HepG2 (cell line): ENCODE measurements at regions of chr6 and their contacts with region 1.

Region 1: DNA sequence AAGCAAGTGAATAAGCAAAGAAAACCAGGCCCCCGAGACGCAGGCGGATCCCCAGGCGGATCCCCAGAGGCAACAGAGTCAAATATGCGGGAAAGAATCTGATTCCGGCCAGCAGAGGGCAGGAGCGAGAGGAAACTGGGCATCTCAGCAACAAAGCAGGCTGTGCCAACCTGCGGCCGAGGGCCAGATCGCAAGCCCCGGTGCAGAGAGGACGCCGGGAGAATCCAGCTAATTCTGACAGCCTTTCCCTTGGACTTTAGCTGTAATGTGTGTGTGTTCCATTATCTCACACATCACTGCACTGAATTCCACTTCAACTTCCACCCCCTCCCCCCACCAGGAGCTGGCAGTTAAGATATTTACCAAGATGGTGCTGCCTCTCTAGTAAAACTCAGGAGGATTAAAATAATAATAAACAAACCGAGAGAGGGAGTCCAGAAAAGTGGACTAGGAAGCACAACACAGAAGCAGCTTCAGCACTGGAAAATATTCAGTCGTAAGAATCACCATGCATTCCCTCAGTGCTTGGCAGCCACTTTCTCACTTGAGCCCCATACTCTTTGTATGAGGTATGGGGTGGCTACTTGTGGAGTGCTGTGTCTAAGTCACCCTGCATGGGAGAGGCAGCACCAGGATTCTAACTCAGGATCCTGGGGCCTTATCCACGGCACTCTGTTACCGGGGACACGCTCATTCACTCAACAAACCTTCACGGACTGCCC is 66.2 kb upstream of the SNX9 start:
- DNase-seq: peak; percentile 81
- ATAC-seq: peak; percentile 95
- H3K4me3 ChIP-seq: peak overlapping the region in 2 of 3 experiments; percentile 4 to 34; a peak in 3 of 6 replicates
- H3K27ac ChIP-seq: no peak overlapping the region
- H3K4me1 ChIP-seq: peaks cover 57% of the 10 kb centered on the region
- H3K27me3 ChIP-seq: peaks cover 0 to 2% of the 10 kb centered on the region in 2 experiments; a peak in 1 of 5 replicates
- CTCF ChIP-seq: peak; percentile 95
- EP300 ChIP-seq: no peak; a peak in 1 of 4 replicates
- POLR2A ChIP-seq: no peak
- RAD21 ChIP-seq: peak; percentile 96

Region 2: DNA sequence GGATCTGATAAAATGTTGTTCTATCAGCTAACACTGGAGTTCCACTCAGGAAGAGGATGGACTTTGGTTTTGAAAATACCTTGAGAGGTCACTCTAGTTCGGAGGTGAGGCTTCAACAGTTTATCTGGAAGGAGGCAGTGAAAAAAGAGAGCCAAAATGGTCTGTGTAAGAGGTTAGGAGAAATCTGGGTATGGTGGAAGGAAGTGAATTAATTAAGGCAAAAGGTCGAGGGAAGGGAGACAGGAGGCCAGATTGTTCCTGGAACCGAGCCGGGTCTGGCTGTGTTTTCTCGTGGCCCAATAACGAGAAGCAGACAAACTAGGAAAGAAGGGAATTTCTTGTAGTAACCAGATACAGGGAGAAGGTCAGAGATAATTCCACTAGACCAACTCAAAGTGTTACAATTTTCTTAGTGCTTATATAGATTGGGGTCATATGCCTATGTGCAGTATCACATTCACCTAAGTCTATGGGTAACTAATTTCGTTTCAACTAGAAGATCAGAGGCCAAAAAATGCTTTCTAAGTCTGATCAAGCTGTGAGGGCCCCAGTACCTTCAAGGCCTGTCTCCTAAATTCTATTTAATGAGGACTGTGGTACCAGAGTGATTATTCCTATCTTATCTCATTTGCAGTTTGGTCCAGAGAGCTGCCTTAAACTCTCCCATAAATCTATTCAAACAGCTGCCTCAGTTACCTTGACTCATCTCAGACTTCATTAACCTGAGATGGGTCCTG is 29.8 kb before region 1 on chr6:
- CTCF ChIA-PET with region 1: no interaction called
- POLR2A ChIA-PET with region 1: interaction called, 10 read pairs
- in situ Hi-C with region 1: no loop called
- intact Hi-C with region 1: loop called (anchors 5 kb)
- DNase-seq: no peak
- ATAC-seq: no peak
- H3K4me3 ChIP-seq: no peak overlapping the region; a peak in 1 of 6 replicates
- H3K27ac ChIP-seq: peak overlapping the region; percentile 94
- H3K4me1 ChIP-seq: peaks cover 72% of the 10 kb centered on the region
- H3K27me3 ChIP-seq: no peaks in the 10 kb centered on the region
- CTCF ChIP-seq: no peak
- EP300 ChIP-seq: no peak
- POLR2A ChIP-seq: no peak
- RAD21 ChIP-seq: no peak

Region 3: DNA sequence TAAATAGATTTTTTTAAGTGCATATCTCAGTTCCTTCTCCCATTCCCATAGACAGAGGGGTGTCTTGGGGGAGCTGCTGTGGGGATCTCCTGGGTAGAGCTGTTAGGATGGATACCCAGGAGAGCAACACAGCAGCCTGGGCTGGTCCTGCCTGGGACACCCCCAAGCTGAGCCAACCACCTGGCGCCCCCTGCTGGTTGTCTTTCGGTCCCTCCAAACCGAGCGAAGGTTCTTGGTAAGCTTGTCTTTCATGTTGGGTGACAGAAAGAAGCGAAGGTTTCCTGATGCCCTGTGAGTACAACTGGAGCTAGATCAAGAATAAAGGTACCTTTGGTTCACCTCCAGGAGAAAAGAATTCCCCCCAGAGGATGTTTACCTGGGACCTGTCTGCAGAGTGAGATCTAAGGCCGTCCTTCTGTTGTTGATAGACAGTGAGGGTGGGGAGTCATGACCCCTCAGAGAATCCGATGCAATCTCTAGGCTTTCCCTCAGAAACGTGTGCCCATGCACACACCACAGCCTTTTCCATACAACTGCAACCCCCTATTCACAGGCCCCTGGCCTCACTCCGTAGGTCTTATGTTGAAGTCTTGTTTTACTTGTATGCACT is 117.0 kb after region 1 on chr6:
- CTCF ChIA-PET with region 1: interaction called, 31 read pairs
- POLR2A ChIA-PET with region 1: no interaction called
- in situ Hi-C with region 1: loop called (anchors 5 kb)
- intact Hi-C with region 1: loop called (anchors 1 kb)
- DNase-seq: peak; percentile 64
- ATAC-seq: peak; percentile 97
- H3K4me3 ChIP-seq: no peak overlapping the region
- H3K27ac ChIP-seq: no peak overlapping the region
- H3K4me1 ChIP-seq: no peaks in the 10 kb centered on the region
- H3K27me3 ChIP-seq: no peaks in the 10 kb centered on the region
- CTCF ChIP-seq: peak; percentile 91
- EP300 ChIP-seq: no peak
- POLR2A ChIP-seq: no peak
- RAD21 ChIP-seq: peak; percentile 92

Region 4: GRCh38 chr6:157954150-157955117 is 197.6 kb after region 1 on chr6:
- CTCF ChIA-PET with region 1: no interaction called
- POLR2A ChIA-PET with region 1: interaction called, 9 read pairs
- in situ Hi-C with region 1: loop called (anchors 5 kb)
- intact Hi-C with region 1: loop called (anchors 5 kb)
- DNase-seq: peak; percentile 95
- ATAC-seq: peak; percentile 88
- H3K4me3 ChIP-seq: peak overlapping the region; percentile 49 to 72 (median 54)
- H3K27ac ChIP-seq: peak overlapping the region; percentile 87
- H3K4me1 ChIP-seq: peaks cover 50% of the 10 kb centered on the region
- H3K27me3 ChIP-seq: no peaks in the 10 kb centered on the region; a peak in 1 of 5 replicates
- CTCF ChIP-seq: peak; percentile 87
- EP300 ChIP-seq: peak in 1 of 2 experiments; percentile 86; a peak in 3 of 4 replicates
- POLR2A ChIP-seq: peak; percentile 33 to 74; a peak in 3 of 4 replicates
- RAD21 ChIP-seq: peak; percentile 80